ENCODE measurements at regions of chr11 and their contacts with region 1.

Region 1: GRCh38 chr11:57530596-57531507 is at the start of gene TIMM10:
- DNase-seq: peak; percentile 95 to 99
- ATAC-seq: peak; percentile 95 to 99
- H3K4me3 ChIP-seq: peak within 1 kb of the TSS; percentile 68
- H3K27ac ChIP-seq: peak within 1 kb of the TSS; percentile 75 to 89
- H3K4me1 ChIP-seq: peaks cover 12% of the 10 kb centered on the region
- CTCF ChIP-seq: no peak
- EP300 ChIP-seq: no peak
- POLR2A ChIP-seq: peak; percentile 18; the same call in 1 of the 2 replicates
- RAD21 ChIP-seq: no peak
- polyA plus RNA-seq, gene TIMM10: 248 and 249 TPM in 2 replicates

Region 2: GRCh38 chr11:57324886-57325734 is 205.7 kb before region 1 on chr11 and contains the start of gene TNKS1BP1:
- CTCF ChIA-PET with region 1: interaction called, 12 read pairs
- POLR2A ChIA-PET with region 1: no interaction called
- DNase-seq: peak; percentile 94 to 97
- ATAC-seq: peak; percentile 63 to 81
- H3K4me3 ChIP-seq: peak within 1 kb of the TSS; percentile 64
- H3K27ac ChIP-seq: peak within 1 kb of the TSS; percentile 91 to 99
- H3K4me1 ChIP-seq: peaks cover 42% of the 10 kb centered on the region
- CTCF ChIP-seq: no peak
- EP300 ChIP-seq: no peak
- POLR2A ChIP-seq: peak; percentile 32
- RAD21 ChIP-seq: no peak
- polyA plus RNA-seq, gene TNKS1BP1: 35.0 and 36.5 TPM in 2 replicates

Region 3: GRCh38 chr11:57345555-57346211 is 185.2 kb before region 1 on chr11:
- CTCF ChIA-PET with region 1: interaction called, 125 read pairs
- POLR2A ChIA-PET with region 1: no interaction called
- DNase-seq: peak; percentile 81 to 84
- ATAC-seq: peak; percentile 66 to 78
- H3K4me3 ChIP-seq: no peak overlapping the region
- H3K27ac ChIP-seq: peak overlapping the region; percentile 50 to 75; a peak in 5 of 6 replicates
- H3K4me1 ChIP-seq: peaks cover 18% of the 10 kb centered on the region
- CTCF ChIP-seq: peak; percentile 91
- EP300 ChIP-seq: no peak
- POLR2A ChIP-seq: no peak
- RAD21 ChIP-seq: peak; percentile 82 to 97

Region 4: GRCh38 chr11:57480409-57481137 is 50.3 kb before region 1 on chr11:
- CTCF ChIA-PET with region 1: interaction called, 32 read pairs
- POLR2A ChIA-PET with region 1: no interaction called
- DNase-seq: peak; percentile 77 to 91
- ATAC-seq: peak; percentile 72 to 76
- H3K4me3 ChIP-seq: no peak overlapping the region
- H3K27ac ChIP-seq: peak overlapping the region in 1 of 2 experiments; percentile 45; a peak in 2 of 6 replicates
- H3K4me1 ChIP-seq: peaks cover 50% of the 10 kb centered on the region
- CTCF ChIP-seq: peak; percentile 73
- EP300 ChIP-seq: no peak
- POLR2A ChIP-seq: no peak
- RAD21 ChIP-seq: peak; percentile 60 to 69

Region 5: GRCh38 chr11:57515332-57516060 is 15.4 kb before region 1 on chr11 and contains the start of gene SLC43A1:
- CTCF ChIA-PET with region 1: interaction called, 119 read pairs
- POLR2A ChIA-PET with region 1: no interaction called
- DNase-seq: peak in 1 of 2 experiments; percentile 65
- ATAC-seq: peak; percentile 51 to 76
- H3K4me3 ChIP-seq: peak within 1 kb of the TSS; percentile 78
- H3K27ac ChIP-seq: peak within 1 kb of the TSS; percentile 68 to 85
- H3K4me1 ChIP-seq: peaks cover 4% of the 10 kb centered on the region; the same call in 1 of the 3 replicates
- CTCF ChIP-seq: no peak
- EP300 ChIP-seq: no peak
- POLR2A ChIP-seq: no peak
- RAD21 ChIP-seq: no peak
- polyA plus RNA-seq, gene SLC43A1: 4.6 and 5.3 TPM in 2 replicates